GM12878 (cell line): ENCODE measurements at regions of chr14 and their contacts with region 1.

Region 1: DNA sequence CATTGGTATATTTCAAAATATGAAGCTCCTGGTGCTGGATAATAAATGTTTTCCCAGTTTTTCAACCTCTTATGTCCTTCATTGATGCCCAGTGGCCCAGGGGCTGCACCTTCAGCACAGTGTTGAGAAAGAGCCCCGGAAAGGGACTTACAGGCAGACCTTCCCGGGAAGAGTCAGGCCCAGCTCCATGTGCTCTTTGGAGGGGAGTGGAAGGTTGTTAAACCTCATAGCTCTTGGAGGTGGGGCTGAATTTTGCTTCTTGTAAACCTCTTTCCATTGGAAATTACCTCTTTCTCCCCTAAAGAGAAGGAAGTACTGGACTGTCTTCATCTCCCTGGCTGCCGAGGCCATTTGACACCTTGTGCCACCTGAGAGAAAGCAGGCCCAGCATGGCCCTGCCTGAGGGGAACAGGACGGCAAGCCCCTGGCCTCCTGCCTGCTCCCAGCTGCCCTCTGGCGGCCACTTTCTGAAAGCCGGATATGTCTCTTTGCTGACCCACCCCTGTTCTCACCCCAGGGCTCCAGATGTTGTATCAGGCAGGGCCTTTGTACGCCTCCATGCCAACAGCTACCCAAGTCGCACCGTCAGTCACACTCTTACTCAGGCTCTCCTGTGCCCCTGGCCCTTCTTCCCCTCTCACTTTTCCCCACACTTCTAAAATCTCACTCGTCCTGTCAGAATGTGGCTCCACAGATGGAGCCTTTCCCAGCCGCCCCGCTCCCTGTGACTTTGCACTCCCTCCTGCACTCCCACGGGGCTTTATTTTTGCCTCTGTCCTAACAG is 43.0 kb downstream of the EVL start:
- DNase-seq: peak; percentile 15
- ATAC-seq: peak; percentile 99
- H3K4me3 ChIP-seq: no peak overlapping the region
- H3K27ac ChIP-seq: no peak overlapping the region
- H3K4me1 ChIP-seq: peaks cover 9% of the 10 kb centered on the region
- H3K27me3 ChIP-seq: no peaks in the 10 kb centered on the region
- CTCF ChIP-seq: peak; percentile 82 to 89 (median 87)
- EP300 ChIP-seq: no peak
- POLR2A ChIP-seq: no peak
- RAD21 ChIP-seq: peak; percentile 79

Region 2: DNA sequence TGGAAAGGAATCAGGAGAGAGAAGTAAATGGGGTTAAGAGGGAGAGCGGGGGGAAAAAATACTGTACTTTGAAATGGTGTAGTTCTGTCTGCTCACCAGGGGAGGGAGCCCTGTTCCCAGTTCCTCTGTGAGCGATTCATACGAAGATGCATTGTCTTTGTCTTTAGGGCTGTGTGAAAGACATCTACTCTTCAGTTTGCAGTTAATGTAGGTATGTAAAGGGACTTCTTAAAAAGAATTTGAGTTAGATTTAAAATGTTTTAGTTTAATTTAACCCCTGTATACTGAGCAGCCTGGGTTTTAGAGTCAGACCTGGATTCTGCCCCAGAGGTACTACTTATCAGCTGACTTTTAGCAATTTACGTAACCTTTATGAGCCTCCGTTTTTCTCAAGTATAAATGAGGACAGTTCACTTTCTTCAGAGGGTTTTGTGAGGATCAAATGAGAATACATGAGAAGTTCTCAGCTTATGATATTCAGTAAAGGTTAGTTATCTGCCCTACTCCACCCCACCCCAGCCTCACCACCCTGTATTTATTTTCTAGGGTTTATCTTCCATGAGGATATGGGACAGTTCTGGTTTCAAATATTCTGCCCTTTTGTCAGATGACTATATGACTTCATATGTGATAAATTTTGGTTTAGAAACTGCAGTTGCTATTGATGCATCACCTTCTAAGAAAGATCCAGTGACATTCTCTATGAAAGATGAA is 125.5 kb before region 1 on chr14:
- CTCF ChIA-PET with region 1: interaction called, 49 read pairs
- POLR2A ChIA-PET with region 1: interaction called, 3 read pairs
- RAD21 ChIA-PET with region 1: interaction called, 5 read pairs
- SMC1A ChIA-PET with region 1: interaction called, 36 read pairs
- in situ Hi-C with region 1: no loop called
- intact Hi-C with region 1: loop called (anchors 1 kb)
- DNase-seq: peak; percentile 33
- ATAC-seq: peak; percentile 95
- H3K4me3 ChIP-seq: no peak overlapping the region
- H3K27ac ChIP-seq: no peak overlapping the region
- H3K4me1 ChIP-seq: no peaks in the 10 kb centered on the region
- H3K27me3 ChIP-seq: no peaks in the 10 kb centered on the region
- CTCF ChIP-seq: peak; percentile 84 to 93 (median 86)
- EP300 ChIP-seq: no peak
- POLR2A ChIP-seq: no peak
- RAD21 ChIP-seq: peak; percentile 93

Region 3: DNA sequence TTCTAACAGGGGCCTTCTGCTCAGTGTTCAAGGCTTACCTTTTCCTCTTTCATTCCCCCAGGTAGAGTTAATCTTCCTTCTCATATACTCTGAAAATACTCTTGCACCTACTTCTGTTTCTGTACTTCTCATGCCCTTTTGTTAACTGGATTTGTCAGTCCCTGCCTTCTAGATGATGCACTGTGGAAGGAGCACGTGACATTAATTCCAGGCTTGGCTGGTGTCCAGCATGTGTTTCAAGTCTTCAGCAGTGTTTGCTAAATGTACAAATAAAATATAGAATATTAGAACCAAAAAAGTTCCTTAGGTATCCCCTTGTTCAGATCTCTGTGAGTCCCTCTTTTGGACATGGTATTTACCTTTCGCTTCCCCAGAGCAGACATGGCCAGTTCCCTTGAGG is 70.9 kb before region 1 on chr14:
- CTCF ChIA-PET with region 1: interaction called, 5 read pairs
- POLR2A ChIA-PET with region 1: interaction called, 3 read pairs
- RAD21 ChIA-PET with region 1: no interaction called
- SMC1A ChIA-PET with region 1: interaction called, 14 read pairs
- in situ Hi-C with region 1: no loop called
- intact Hi-C with region 1: no loop called
- DNase-seq: no peak
- ATAC-seq: no peak
- H3K4me3 ChIP-seq: no peak overlapping the region
- H3K27ac ChIP-seq: no peak overlapping the region
- H3K4me1 ChIP-seq: no peaks in the 10 kb centered on the region
- H3K27me3 ChIP-seq: no peaks in the 10 kb centered on the region
- CTCF ChIP-seq: no peak
- EP300 ChIP-seq: no peak
- POLR2A ChIP-seq: no peak
- RAD21 ChIP-seq: no peak

Region 4: DNA sequence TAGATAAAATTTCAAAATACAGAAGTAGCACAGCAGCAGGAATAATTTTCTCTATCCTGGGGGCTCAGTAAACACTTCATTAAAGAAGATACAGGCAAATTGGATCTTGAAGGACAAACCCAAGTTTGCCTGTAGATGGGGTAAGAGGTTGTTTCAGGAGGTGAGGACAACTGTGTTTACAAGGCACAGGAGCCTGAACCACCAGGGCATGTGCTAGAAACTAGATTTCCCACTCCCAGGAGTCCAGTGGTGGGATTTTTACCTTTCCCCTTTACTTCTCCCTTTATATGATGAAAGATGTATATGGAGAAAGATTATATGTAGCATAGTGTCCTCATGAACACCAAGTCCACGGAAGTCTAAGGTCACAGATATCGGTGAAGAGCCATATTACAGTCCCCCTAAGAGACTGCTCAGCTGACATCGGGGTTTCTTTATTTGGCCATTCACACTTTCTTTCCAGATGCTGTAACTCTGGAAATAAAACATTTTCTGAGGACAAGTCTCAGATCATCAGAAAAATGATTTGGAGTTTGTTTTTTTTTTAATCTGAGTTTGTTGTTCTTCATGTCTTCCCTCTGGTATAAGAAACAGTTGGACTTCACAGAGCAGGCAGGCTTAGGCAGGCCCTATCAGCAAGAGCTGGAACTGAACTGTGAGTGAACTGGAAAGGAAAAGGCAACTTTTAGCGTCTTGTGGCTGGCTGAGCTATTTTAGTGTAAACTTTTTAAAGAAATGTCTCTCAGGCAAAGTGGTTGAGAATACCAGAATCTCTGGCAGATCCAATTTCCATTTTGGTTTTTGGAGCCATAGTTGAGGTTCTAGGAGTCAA is 51.1 kb before region 1 on chr14:
- CTCF ChIA-PET with region 1: interaction called, 52 read pairs
- POLR2A ChIA-PET with region 1: no interaction called
- RAD21 ChIA-PET with region 1: interaction called, 13 read pairs
- SMC1A ChIA-PET with region 1: interaction called, 25 read pairs
- in situ Hi-C with region 1: no loop called
- intact Hi-C with region 1: loop called (anchors 1 kb)
- DNase-seq: no peak
- ATAC-seq: peak; percentile 80
- H3K4me3 ChIP-seq: no peak overlapping the region
- H3K27ac ChIP-seq: peak overlapping the region; percentile 53
- H3K4me1 ChIP-seq: peaks cover 37% of the 10 kb centered on the region
- H3K27me3 ChIP-seq: no peaks in the 10 kb centered on the region
- CTCF ChIP-seq: peak; percentile 53 to 76 (median 61)
- EP300 ChIP-seq: no peak
- POLR2A ChIP-seq: no peak
- RAD21 ChIP-seq: peak; percentile 85

Region 5: GRCh38 chr14:100078991-100079725 is 29.1 kb before region 1 on chr14:
- CTCF ChIA-PET with region 1: interaction called, 130 read pairs
- POLR2A ChIA-PET with region 1: interaction called, 4 read pairs
- RAD21 ChIA-PET with region 1: interaction called, 44 read pairs
- SMC1A ChIA-PET with region 1: interaction called, 42 read pairs
- in situ Hi-C with region 1: no loop called
- intact Hi-C with region 1: loop called (anchors 1 kb)
- DNase-seq: no peak
- ATAC-seq: peak; percentile 48
- H3K4me3 ChIP-seq: no peak overlapping the region
- H3K27ac ChIP-seq: peak overlapping the region; percentile 63
- H3K4me1 ChIP-seq: peaks cover 43% of the 10 kb centered on the region
- H3K27me3 ChIP-seq: no peaks in the 10 kb centered on the region
- CTCF ChIP-seq: no peak
- EP300 ChIP-seq: no peak
- POLR2A ChIP-seq: peak; percentile 21; the same call in 1 of the 2 replicates
- RAD21 ChIP-seq: no peak

Region 6: GRCh38 chr14:100096570-100096971 is 11.7 kb before region 1 on chr14:
- CTCF ChIA-PET with region 1: interaction called, 10 read pairs
- POLR2A ChIA-PET with region 1: no interaction called
- RAD21 ChIA-PET with region 1: interaction called, 3 read pairs
- SMC1A ChIA-PET with region 1: interaction called, 4 read pairs
- in situ Hi-C with region 1: no loop called
- intact Hi-C with region 1: no loop called
- DNase-seq: no peak
- ATAC-seq: no peak
- H3K4me3 ChIP-seq: no peak overlapping the region
- H3K27ac ChIP-seq: no peak overlapping the region
- H3K4me1 ChIP-seq: no peaks in the 10 kb centered on the region
- H3K27me3 ChIP-seq: no peaks in the 10 kb centered on the region
- CTCF ChIP-seq: no peak
- EP300 ChIP-seq: no peak
- POLR2A ChIP-seq: no peak
- RAD21 ChIP-seq: no peak

Region 7: DNA sequence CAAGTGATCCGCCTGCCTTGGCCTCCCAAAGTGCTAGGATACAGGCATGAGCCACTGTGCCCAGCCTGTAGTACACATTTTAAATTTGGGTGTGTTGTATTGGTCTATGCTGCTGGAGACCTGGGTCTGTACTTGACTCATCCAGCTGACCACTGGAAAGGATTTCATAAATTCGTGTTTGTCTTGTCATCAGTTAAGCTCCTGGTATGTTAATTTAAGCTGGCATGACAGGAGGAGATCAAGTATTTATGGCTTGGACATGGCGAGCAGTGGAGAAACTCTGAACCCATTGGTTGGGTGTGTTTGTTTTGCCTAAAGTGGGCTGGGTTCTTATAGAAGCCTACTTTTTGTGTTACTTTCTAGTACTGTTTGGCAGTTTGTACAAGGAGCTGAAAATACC is 154.9 kb after region 1 on chr14:
- CTCF ChIA-PET with region 1: no interaction called
- POLR2A ChIA-PET with region 1: no interaction called
- RAD21 ChIA-PET with region 1: no interaction called
- SMC1A ChIA-PET with region 1: no interaction called
- in situ Hi-C with region 1: no loop called
- intact Hi-C with region 1: no loop called
- DNase-seq: no peak
- ATAC-seq: no peak
- H3K4me3 ChIP-seq: no peak overlapping the region
- H3K27ac ChIP-seq: no peak overlapping the region
- H3K4me1 ChIP-seq: peaks cover 29% of the 10 kb centered on the region
- H3K27me3 ChIP-seq: no peaks in the 10 kb centered on the region
- CTCF ChIP-seq: no peak
- EP300 ChIP-seq: no peak
- POLR2A ChIP-seq: no peak
- RAD21 ChIP-seq: no peak

Region 8: GRCh38 chr14:100486025-100486828 is 378.0 kb after region 1 on chr14:
- CTCF ChIA-PET with region 1: no interaction called
- POLR2A ChIA-PET with region 1: no interaction called
- RAD21 ChIA-PET with region 1: no interaction called
- SMC1A ChIA-PET with region 1: no interaction called
- in situ Hi-C with region 1: no loop called
- intact Hi-C with region 1: no loop called
- DNase-seq: peak; percentile 66
- ATAC-seq: peak; percentile 95
- H3K4me3 ChIP-seq: no peak overlapping the region
- H3K27ac ChIP-seq: no peak overlapping the region
- H3K4me1 ChIP-seq: peaks cover 8% of the 10 kb centered on the region
- H3K27me3 ChIP-seq: no peaks in the 10 kb centered on the region
- CTCF ChIP-seq: no peak
- EP300 ChIP-seq: peak in 1 of 2 experiments; percentile 45; a peak in 1 of 4 replicates
- POLR2A ChIP-seq: no peak
- RAD21 ChIP-seq: no peak